Tibial artery (tissue), 4 donors: ENCODE measurements at regions of chr5 and their contacts with region 1.

Region 1: GRCh38 chr5:172194985-172195774 is 1.2 kb downstream of the EFCAB9 start:
- DNase-seq: no peak
- H3K4me3 ChIP-seq: no peak overlapping the region
- H3K27ac ChIP-seq: no peak overlapping the region
- H3K4me1 ChIP-seq: no peaks in the 10 kb centered on the region
- H3K27me3 ChIP-seq: no peaks in the 10 kb centered on the region
- CTCF ChIP-seq: no peak

Region 2: GRCh38 chr5:171316258-171317121 is 878.7 kb before region 1 on chr5:
- intact Hi-C with region 1: no loop called
- DNase-seq: peak in 1 of 2 donors; percentile 56
- H3K4me3 ChIP-seq: peak overlapping the region; percentile 8 to 45
- H3K27ac ChIP-seq: no peak overlapping the region
- H3K4me1 ChIP-seq: peaks cover 0 to 48% (median 42%) of the 10 kb centered on the region in 4 donors
- H3K27me3 ChIP-seq: peaks cover 0 to 100% of the 10 kb centered on the region in 2 donors
- CTCF ChIP-seq: no peak

Region 3: DNA sequence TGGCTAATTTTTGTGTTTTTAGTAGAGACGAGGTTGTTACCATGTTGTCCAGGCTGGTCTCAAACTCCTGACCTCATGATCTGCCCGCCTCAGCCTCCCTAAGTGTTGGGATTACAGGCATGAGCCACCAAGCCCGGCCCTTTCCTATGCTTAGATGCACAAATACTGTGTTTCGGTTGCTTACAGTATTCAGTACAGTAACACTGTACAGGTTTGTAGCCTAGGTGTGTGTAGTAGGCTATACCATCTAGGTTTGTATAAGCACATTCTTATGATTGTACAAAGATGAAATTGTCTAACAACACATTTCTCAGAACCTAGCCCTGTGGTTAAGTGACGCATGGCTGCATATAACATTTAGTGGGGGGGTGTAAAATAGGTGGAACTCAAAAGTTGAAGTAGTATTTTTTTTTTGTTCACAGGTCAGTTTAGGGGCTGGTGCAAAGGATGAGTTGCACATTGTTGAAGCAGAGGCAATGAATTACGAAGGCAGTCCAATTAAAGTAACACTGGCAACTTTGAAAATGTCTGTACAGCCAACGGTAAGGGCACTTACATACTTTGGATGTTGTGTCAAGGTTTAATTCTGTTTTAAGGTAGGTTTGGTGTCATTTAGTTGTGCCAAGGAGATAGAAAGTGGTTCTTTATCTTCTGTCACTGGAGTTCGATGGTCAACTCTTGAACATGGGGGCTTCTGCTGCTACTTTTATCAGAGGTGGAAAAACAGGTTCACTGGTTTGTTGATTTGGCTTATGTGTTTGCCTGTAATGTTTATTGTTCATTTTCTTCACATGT is 804.1 kb before region 1 on chr5:
- intact Hi-C with region 1: loop called (anchors 5 kb)
- DNase-seq: no peak
- H3K4me3 ChIP-seq: no peak overlapping the region
- H3K27ac ChIP-seq: no peak overlapping the region
- H3K4me1 ChIP-seq: peaks cover 0 to 40% (median 18%) of the 10 kb centered on the region in 4 donors
- H3K27me3 ChIP-seq: no peaks in the 10 kb centered on the region
- CTCF ChIP-seq: no peak

Region 4: DNA sequence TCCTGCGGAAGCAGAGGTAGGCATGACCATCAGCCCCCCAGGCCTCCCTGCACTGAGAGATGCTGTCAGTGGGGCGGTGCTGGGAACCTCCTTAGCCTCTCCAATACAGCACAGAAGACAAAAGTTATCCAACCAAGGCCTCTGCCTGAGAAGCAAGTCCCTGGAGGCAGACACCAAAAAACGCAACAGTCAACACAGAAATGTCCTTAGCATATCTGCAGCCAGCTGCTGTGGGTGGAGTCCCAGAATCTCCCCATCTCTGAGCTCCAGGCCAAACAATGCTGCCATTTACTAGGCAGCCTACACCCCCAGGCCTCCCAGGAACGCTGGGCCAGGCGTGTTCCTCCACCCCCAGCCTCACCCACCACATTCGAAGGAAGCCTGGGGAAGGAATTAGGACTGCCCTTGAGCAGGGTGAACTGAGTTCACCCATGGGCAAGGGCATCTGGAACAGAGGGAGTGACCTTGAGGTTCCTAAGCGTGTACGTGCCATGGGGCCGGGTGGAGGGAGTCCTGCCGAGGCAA is 50.8 kb before region 1 on chr5:
- intact Hi-C with region 1: no loop called
- DNase-seq: no peak
- H3K4me3 ChIP-seq: no peak overlapping the region
- H3K27ac ChIP-seq: no peak overlapping the region
- H3K4me1 ChIP-seq: no peaks in the 10 kb centered on the region
- H3K27me3 ChIP-seq: no peaks in the 10 kb centered on the region
- CTCF ChIP-seq: no peak